ENCODE measurements at regions of chr18 and their contacts with region 1.

Region 1: GRCh38 chr18:50203801-50204604 is 9.1 kb upstream of the MYO5B start:
- DNase-seq: peak; percentile 60
- H3K4me3 ChIP-seq: no peak overlapping the region
- H3K27ac ChIP-seq: no peak overlapping the region
- H3K4me1 ChIP-seq: peaks cover 0 to 5% (median 0%) of the 10 kb centered on the region in 4 donors
- H3K27me3 ChIP-seq: peaks cover 6% of the 10 kb centered on the region
- CTCF ChIP-seq: peak; percentile 42 to 64 (median 56)
- EP300 ChIP-seq: no peak
- POLR2A ChIP-seq: no peak

Region 2: DNA sequence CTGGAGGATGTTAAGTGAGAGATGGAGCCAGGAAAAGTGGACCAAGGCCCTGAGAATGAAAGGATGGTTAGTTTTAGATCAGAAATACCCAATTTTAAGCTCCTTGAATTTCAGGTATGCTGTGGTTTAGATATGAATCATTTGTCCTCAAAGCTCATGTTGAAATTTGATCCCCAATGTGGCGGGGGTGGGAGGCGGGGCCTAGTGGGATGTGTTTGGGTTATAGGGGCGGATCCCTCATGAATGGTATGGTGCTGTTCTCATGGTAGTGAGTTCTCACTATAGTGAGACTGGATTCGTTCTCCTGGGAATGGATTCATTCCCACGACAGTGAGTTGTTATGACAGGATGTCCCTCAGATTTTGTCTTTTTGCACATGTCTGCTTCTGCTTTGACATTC is 20.4 kb before region 1 on chr18:
- in situ Hi-C with region 1: no loop called
- intact Hi-C with region 1: loop called (anchors 1 kb)
- DNase-seq: no peak
- H3K4me3 ChIP-seq: no peak overlapping the region
- H3K27ac ChIP-seq: no peak overlapping the region
- H3K4me1 ChIP-seq: peaks cover 0 to 9% (median 7%) of the 10 kb centered on the region in 4 donors
- H3K27me3 ChIP-seq: no peaks in the 10 kb centered on the region
- CTCF ChIP-seq: no peak
- EP300 ChIP-seq: no peak
- POLR2A ChIP-seq: no peak

Region 3: DNA sequence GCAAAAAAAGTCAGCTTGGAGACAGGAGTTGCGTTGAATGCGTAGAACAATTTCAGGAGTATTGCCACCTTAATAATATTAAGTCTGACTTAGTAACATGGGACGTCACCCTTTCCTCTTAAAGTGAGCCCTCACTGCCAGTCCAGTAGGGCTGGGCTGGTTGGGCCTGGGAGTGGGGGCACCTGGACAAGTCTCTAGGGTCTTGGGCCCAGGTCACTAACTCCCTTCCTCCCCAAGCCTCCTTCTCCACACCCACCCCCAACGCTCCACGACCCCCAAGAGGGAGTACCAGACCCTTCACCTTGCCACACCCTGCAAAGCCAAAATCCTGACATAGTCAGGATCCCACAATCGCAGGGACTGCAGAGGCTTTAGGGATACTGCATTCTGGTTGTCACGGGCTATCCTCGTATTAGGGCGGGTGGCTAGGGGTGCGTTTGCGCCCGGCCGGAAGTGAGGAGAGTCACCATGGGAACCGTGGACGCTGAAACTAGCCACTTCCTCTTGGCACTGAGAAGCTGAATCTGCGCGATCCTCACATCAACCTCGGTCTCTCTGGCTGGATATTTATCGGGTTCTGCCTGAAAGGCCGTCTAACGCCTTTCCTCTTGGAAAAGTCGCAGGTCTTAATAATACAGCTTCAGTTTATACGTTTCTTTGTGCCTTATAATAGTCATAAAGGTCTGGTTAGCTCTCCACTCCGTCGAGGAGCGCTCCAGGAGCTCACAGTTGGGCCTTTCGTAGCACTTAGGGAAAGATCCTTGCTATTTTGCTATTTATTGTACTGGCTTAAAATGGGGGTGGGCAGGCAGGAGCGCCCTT is 93.8 kb after region 1 on chr18:
- in situ Hi-C with region 1: no loop called
- intact Hi-C with region 1: no loop called
- DNase-seq: peak; percentile 88
- H3K4me3 ChIP-seq: peak overlapping the region; percentile 17 to 46 (median 26)
- H3K27ac ChIP-seq: no peak overlapping the region
- H3K4me1 ChIP-seq: peaks cover 4 to 14% (median 8%) of the 10 kb centered on the region in 4 donors
- H3K27me3 ChIP-seq: peaks cover 36% of the 10 kb centered on the region
- CTCF ChIP-seq: no peak
- EP300 ChIP-seq: no peak
- POLR2A ChIP-seq: no peak

Region 4: DNA sequence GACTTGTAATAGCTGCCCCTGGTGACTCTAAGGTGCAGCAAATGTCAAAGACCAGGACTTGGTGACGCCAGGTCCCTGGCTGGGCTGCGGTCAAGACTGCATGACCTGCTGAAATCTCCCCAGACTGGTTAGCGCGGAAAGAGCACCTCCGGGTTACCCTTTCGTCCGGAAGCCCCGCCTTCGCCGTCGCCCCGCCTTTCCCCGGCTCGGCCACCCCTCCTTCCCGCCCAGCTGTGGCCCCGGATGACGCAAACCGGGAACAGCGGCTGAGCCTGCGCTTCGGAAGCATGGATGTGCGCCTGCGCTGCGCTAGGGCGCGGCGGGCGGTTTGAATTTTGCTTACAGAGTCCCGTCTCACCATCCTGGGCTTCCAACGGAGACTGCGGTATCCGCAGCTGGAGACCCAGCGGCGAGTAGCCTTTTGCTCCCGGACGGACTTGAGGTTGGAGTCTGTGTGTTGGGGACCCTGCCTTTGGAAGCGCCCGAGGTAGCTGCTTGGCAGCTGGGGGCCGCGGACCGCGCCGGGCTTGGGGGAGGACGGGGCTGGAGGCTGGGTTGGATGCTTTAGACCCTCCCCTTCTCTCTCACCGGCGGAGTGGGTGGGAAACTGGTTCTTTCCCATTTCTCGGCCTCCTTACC is 170.9 kb after region 1 on chr18 and contains the start of gene SKA1:
- in situ Hi-C with region 1: loop called in 1 of 4 experiments (anchors 25 kb)
- intact Hi-C with region 1: no loop called
- DNase-seq: peak; percentile 95
- H3K4me3 ChIP-seq: peak within 1 kb of the TSS; percentile 25 to 80 (median 42)
- H3K27ac ChIP-seq: peak within 1 kb of the TSS; percentile 87 to 90 (median 88)
- H3K4me1 ChIP-seq: peaks cover 4 to 23% (median 9%) of the 10 kb centered on the region in 4 donors
- H3K27me3 ChIP-seq: no peaks in the 10 kb centered on the region
- CTCF ChIP-seq: no peak
- EP300 ChIP-seq: no peak
- POLR2A ChIP-seq: peak; percentile 82
- total RNA-seq, gene SKA1: 0.14 to 4.2 TPM in 2 of 4 donors, not detected in the others

Measured in transverse colon (tissue), 4 donors.